PC-9 (cell line): ENCODE measurements at regions of chr5 and their contacts with region 1.

Region 1: DNA sequence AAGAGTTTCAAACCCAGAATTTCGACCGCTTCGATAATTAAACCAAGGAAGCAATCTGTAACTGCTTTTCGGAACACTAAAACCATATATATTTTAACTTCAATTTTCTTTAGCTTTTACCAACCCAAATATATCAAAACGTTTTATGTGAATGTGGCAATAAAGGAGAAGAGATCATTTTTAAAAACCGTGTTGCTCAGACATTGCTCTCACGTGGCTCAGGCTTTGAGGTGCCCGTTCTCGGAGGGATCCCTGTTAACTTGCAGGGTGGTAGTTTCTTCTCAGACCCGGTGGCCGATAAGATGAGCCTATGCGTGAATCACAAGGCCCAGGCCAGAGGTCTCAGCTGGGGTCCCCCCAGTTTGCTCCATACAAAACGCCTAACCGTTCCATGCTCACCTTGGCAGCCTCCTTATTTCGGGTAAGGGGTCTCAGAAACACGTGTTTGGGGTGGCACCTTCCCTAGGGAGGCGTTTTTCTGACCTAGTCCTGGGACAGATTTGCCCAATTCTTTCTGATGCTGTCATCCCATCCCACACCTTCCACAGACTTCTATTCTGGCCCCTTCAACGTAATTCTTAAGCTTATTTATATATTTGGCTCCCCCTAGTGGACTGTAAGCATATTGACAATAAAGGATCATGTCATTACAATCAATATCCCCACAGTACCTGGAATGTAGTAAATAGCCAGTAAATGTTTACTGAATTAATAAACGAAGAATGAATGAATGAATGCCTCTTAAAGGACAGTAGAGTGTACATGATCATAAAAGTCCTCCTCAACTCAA is 48.1 kb downstream of the THBS4 start:
- DNase-seq: peak; percentile 37 to 72
- H3K4me3 ChIP-seq: peak overlapping the region; percentile 53; the same call in 1 of the 2 replicates
- H3K27ac ChIP-seq: no peak overlapping the region
- H3K4me1 ChIP-seq: peaks cover 7% of the 10 kb centered on the region; the same call in 1 of the 2 replicates
- H3K27me3 ChIP-seq: no peaks in the 10 kb centered on the region
- CTCF ChIP-seq: peak; percentile 82

Region 2: DNA sequence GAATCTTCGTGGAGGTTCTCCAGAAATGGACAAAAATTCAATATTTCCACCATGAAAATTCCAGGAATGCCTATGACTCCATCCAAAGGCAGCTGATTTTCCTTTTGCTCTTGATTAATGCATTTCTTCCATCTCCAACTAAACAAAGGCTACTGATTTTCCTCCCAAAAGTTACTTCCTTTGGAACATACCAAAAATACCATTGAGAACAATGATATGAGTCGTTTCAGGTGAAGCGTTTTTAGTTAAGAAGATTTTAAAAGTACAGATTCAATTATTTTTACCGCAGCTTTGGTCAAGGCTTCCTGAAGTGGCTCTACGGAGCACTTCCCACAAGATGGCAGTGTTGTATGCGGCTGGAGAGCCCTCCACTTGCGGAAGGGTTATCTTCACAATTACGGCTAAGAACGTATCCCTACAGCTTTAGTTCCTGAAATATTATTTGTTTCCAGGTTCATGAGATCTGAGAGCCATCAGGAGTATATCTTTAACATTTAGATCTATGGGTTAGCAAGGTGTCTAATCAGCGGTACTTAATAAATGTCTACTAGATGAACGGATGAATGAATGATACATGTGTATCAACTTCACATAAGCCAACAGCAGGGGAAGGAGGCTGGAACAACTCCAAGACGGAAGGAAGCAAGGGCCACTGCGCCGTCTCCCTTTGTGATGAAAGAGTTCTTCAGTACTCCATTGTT is 1062.3 kb before region 1 on chr5:
- CTCF ChIA-PET with region 1: interaction called, 5 read pairs
- POLR2A ChIA-PET with region 1: no interaction called
- intact Hi-C with region 1: loop called (anchors 1 kb)
- DNase-seq: peak in 1 of 2 experiments; percentile 38
- H3K4me3 ChIP-seq: no peak overlapping the region
- H3K27ac ChIP-seq: no peak overlapping the region
- H3K4me1 ChIP-seq: no peaks in the 10 kb centered on the region
- H3K27me3 ChIP-seq: no peaks in the 10 kb centered on the region
- CTCF ChIP-seq: peak; percentile 74

Region 3: DNA sequence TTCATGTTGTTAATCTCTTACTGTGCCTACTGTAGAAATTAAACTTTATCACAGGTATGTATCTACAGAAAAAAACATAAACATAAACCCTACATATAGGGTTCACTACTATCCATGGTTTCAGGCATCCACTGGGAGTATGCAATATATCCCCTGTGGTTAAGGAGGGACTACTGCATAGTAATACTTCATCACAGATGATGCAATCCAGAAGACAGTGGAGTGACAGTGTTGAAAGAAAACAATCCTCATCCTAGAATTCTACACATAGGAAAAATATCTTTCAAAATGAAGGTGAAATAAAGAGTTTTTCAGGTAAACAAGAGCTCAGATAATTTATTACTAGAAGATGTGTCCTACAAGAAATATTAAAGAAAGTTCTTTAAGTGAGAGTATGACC is 675.3 kb before region 1 on chr5:
- CTCF ChIA-PET with region 1: interaction called, 13 read pairs
- POLR2A ChIA-PET with region 1: no interaction called
- intact Hi-C with region 1: no loop called
- DNase-seq: no peak
- H3K4me3 ChIP-seq: no peak overlapping the region
- H3K27ac ChIP-seq: no peak overlapping the region
- H3K4me1 ChIP-seq: no peaks in the 10 kb centered on the region
- H3K27me3 ChIP-seq: no peaks in the 10 kb centered on the region
- CTCF ChIP-seq: no peak

Region 4: DNA sequence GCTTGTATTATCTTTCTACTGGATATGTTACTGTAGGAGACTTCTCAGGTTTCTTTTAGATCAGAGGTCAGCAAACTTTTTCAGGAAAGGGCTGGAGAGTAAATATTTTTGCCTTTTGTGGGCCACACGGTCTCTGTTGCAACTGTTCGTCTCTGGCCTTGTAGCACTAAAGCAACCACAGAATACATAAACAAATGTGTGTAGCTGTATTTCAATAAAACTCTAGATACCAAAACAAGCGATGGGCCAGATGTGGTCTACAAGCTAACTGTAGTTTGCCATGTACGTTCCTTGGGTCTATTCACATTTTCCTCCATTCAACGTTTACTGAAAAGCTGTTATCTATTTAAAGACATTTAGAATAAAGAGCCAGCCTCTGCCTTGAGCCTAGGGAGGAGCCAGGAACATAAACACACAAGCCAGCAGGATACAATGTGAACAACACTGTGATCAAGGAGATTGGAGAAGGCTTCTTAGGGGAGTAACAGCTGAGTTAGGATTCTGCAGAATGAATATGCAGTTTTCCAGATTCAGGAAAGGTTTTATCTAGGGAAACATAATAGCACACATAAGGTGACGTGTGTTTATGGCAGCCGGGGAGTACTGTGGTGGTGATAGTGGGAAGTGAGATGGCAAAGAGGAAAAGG is 536.4 kb before region 1 on chr5:
- CTCF ChIA-PET with region 1: no interaction called
- POLR2A ChIA-PET with region 1: interaction called, 18 read pairs
- intact Hi-C with region 1: no loop called
- DNase-seq: no peak
- H3K4me3 ChIP-seq: peak overlapping the region; percentile 44; the same call in 1 of the 2 replicates
- H3K27ac ChIP-seq: peak overlapping the region; percentile 76
- H3K4me1 ChIP-seq: peaks cover 48% of the 10 kb centered on the region
- H3K27me3 ChIP-seq: no peaks in the 10 kb centered on the region
- CTCF ChIP-seq: no peak

Region 5: DNA sequence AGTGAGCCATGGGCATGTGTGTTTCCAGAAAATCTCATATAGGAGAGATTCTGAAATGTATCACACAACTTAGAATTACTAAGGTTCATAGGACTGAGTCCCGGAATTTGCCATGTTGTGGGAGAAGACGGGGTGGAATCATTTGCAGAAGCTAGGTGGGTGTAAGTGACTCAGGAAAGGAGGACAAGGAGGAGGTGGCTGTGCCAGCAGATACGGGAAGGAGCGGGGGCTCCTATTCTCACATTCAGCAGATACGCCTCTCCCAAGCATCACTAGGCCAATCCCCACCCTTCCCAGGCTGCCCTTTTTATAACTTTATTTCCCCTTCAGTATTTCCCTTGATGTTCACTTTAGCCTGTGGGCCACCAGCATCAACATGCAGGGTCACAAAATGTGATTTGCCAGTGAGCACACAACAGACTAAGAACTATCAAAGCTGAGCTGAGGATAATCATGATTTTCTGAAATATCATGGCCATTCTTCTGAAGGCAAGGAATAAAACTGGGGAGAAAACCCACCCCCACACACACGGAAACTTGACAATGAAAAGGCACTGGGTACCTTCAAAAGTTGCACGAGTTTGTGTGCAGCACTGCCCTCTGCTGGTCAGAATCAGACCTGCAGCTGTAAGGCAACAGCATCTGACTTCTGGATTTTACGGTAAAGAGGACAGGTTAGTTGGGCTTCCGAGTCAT is 225.4 kb before region 1 on chr5:
- CTCF ChIA-PET with region 1: interaction called, 4 read pairs
- POLR2A ChIA-PET with region 1: no interaction called
- intact Hi-C with region 1: loop called (anchors 1 kb)
- DNase-seq: peak in 1 of 2 experiments; percentile 65
- H3K4me3 ChIP-seq: no peak overlapping the region
- H3K27ac ChIP-seq: no peak overlapping the region
- H3K4me1 ChIP-seq: no peaks in the 10 kb centered on the region
- H3K27me3 ChIP-seq: no peaks in the 10 kb centered on the region
- CTCF ChIP-seq: peak; percentile 96